Colonic mucosa (tissue), 4 donors: ENCODE measurements at regions of chr11 and their contacts with region 1.

Region 1: GRCh38 chr11:6353367-6353987 is 33.2 kb upstream of the CAVIN3 start:
- DNase-seq: peak; percentile 60
- H3K4me3 ChIP-seq: no peak overlapping the region
- H3K27ac ChIP-seq: no peak overlapping the region
- H3K4me1 ChIP-seq: no peaks in the 10 kb centered on the region
- H3K27me3 ChIP-seq: no peaks in the 10 kb centered on the region
- CTCF ChIP-seq: peak; percentile 91

Region 2: DNA sequence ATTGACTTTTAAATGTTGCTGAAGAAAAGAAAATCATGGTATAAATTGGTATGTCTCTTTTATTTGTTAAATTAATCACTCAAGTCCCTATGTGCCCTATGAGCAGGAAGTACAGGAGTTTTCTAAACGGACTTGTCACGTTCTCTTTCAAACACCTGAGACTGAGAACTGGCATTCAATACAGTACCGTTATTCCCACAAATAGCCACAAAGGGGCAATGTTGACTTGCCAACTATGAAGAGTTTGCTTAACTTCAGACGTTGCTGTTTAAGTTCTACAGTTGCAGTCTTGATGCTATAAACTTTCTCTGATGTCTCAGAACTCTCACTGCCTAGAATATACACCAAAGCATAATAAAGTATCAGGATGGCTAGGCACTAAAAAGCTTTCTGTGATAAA is 330.5 kb before region 1 on chr11:
- intact Hi-C with region 1: loop called (anchors 5 kb)
- DNase-seq: no peak
- H3K4me3 ChIP-seq: no peak overlapping the region
- H3K27ac ChIP-seq: no peak overlapping the region
- H3K4me1 ChIP-seq: no peaks in the 10 kb centered on the region
- H3K27me3 ChIP-seq: no peaks in the 10 kb centered on the region
- CTCF ChIP-seq: peak; percentile 41

Region 3: GRCh38 chr11:6258571-6259081 is 94.9 kb before region 1 on chr11:
- intact Hi-C with region 1: loop called (anchors 5 kb)
- DNase-seq: no peak
- H3K4me3 ChIP-seq: no peak overlapping the region
- H3K27ac ChIP-seq: no peak overlapping the region
- H3K4me1 ChIP-seq: no peaks in the 10 kb centered on the region
- H3K27me3 ChIP-seq: peaks cover 29% of the 10 kb centered on the region
- CTCF ChIP-seq: no peak

Region 4: GRCh38 chr11:6298605-6299004 is 54.9 kb before region 1 on chr11:
- intact Hi-C with region 1: loop called (anchors 10 kb)
- DNase-seq: peak; percentile 21
- H3K4me3 ChIP-seq: no peak overlapping the region
- H3K27ac ChIP-seq: no peak overlapping the region
- H3K4me1 ChIP-seq: no peaks in the 10 kb centered on the region
- H3K27me3 ChIP-seq: no peaks in the 10 kb centered on the region
- CTCF ChIP-seq: peak; percentile 45

Region 5: DNA sequence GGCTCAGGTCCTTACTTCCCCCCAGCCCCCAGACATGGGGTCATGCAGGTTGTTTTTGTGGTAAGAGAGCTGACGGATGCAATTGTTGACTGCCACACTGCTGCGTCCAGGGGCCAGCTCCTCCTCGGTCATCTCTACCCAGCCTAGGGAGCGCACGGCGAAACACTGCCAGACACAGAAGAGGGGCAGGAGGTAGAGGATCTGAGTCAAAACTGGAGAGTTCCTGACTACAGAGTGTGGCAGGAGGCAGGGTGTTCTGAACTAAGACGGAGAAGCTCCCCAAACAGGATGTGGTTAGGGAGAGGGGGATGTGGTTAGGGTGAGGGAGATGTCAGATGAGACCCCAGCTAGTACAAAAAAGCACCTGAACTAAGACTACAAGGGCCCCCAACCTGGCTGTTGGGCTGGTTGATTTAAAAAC is 49.1 kb after region 1 on chr11:
- intact Hi-C with region 1: no loop called
- DNase-seq: peak; percentile 44
- H3K4me3 ChIP-seq: no peak overlapping the region
- H3K27ac ChIP-seq: no peak overlapping the region
- H3K4me1 ChIP-seq: no peaks in the 10 kb centered on the region
- H3K27me3 ChIP-seq: no peaks in the 10 kb centered on the region
- CTCF ChIP-seq: no peak